ENCODE measurements at regions of chr19 and their contacts with region 1.

Region 1: DNA sequence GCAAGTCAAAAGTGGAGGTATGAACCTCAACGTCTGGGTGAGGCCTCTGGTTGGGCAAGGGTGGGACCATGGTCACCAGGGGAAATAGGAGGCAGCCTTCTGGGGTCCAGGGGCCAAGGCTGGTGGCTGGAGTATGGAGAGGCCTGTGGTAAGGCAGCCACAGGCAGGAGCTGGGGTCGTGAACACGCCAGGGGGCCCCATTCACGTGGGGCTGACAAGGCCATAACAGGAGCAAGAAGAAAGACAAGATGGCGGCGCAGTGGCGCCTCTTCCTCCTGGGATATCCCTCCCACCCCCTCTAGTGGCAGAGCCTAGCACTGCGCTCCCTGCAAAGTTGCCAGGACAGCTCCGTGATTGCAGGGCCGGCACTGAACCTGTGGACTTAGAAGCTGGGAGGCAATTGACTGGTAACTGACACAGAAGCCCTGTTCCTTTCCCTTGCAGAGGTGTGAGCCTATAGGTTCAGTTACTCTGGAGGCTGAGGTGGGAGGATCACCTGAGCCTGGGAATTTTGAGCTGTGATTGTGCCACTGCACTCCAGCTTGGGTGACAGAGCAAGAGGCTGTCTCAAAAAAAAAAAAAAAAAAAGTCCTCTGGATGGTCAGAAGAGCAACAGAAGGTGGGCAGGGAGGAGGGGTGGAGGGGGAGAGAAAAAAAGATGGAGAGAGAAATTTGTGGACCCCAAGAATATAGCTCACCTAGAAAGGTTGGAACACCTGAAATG is 19.7 kb upstream of the EDDM13 start:
- DNase-seq: peak; percentile 56 to 82
- H3K4me3 ChIP-seq: no peak overlapping the region
- H3K27ac ChIP-seq: no peak overlapping the region
- H3K4me1 ChIP-seq: no peaks in the 10 kb centered on the region
- H3K27me3 ChIP-seq: no peaks in the 10 kb centered on the region
- CTCF ChIP-seq: peak; percentile 89

Region 2: DNA sequence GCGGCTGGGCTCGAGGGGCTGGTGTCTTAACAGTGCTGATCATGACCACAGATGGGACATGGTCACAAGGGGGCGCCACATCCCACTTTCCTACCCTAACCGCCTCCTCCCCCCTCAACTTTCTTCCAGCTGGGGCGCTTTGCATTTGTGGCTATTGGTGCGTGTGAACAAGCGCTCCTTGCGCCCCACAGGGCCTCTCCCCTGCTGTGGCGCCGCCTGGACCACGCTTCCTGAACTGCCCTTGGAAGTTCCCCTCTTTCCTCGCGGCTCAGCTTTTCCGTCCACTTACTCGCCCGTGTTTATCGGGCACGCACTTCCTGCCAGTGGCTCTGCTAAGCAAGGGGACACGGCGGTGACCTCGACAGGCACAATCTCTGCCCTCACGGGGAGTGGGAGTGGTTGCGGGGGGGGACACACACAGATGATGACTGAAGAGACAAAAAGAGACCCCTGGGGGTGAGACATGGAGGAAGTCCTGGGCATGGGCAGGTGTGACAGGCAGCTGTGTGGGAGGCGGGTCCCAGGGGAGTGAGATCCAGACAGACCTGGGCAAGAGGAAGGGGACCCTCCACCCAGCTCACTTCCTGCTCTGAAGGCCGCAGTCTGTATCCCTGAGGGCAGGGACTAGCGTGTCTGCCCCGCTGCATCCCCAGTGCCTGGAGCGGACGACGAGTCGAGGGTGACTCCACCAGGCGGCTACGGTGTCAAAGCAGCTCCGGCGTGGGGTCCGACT is 172.0 kb before region 1 on chr19:
- CTCF ChIA-PET with region 1: interaction called, 17 read pairs
- POLR2A ChIA-PET with region 1: no interaction called
- intact Hi-C with region 1: loop called (anchors 1 kb)
- DNase-seq: peak in 1 of 2 experiments; percentile 77
- H3K4me3 ChIP-seq: no peak overlapping the region
- H3K27ac ChIP-seq: no peak overlapping the region
- H3K4me1 ChIP-seq: no peaks in the 10 kb centered on the region
- H3K27me3 ChIP-seq: no peaks in the 10 kb centered on the region
- CTCF ChIP-seq: peak; percentile 64

Region 3: GRCh38 chr19:56350416-56351045 is 97.7 kb after region 1 on chr19:
- CTCF ChIA-PET with region 1: no interaction called
- POLR2A ChIA-PET with region 1: no interaction called
- intact Hi-C with region 1: loop called (anchors 5 kb)
- DNase-seq: peak in 1 of 2 experiments; percentile 28
- H3K4me3 ChIP-seq: no peak overlapping the region
- H3K27ac ChIP-seq: no peak overlapping the region
- H3K4me1 ChIP-seq: no peaks in the 10 kb centered on the region
- H3K27me3 ChIP-seq: peaks cover 48% of the 10 kb centered on the region
- CTCF ChIP-seq: peak; percentile 92

Measured in PC-9 (cell line).